CD4-positive, alpha-beta memory T cell (primary cell): ENCODE measurements at regions of chr16 and their contacts with region 1.

Region 1: DNA sequence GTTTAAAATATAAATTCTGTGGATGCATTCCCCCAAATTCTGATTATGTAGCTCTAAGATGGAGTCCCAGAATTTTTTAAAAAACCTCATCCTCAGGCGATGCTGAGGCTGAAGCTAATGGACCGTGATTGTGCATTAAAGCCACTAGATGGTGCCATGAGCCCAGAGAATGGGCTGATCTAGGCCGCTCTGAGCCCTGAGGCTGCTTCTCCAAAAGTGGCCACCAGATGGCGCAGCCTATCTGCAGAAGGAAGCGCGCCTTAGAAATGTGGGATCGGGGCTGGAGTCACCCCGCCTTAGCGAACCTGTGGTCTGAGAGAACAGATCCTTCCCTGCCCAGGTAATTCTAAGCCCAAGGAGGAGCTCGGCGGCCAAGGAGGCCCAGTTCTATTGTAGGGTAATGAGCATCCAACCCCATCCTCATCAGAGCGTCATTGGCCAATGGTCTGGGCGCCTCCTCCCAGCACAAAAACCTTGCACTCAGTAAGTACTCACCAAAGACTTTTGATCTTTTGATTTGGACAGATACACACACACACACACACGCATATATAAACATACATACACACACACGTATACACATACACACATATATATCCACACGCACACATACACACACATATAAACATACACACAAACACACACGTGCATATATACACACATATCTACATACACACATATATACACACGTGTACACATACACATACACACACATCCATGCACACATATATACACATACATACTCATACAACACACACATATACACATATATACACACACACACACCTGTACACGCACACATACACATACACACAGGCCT is 13.7 kb upstream of the MMP2 start:
- DNase-seq: peak; percentile 70 to 79 (median 74)
- H3K4me3 ChIP-seq: no peak overlapping the region
- H3K4me3 Mint-ChIP-seq: peak overlapping the region in 1 of 8 donors; percentile 22
- H3K27ac ChIP-seq: no peak overlapping the region
- H3K27ac Mint-ChIP-seq: no peak overlapping the region
- H3K4me1 ChIP-seq: no peaks in the 10 kb centered on the region
- H3K4me1 Mint-ChIP-seq: peaks cover 0 to 5% (median 1%) of the 10 kb centered on the region in 4 donors
- H3K27me3 ChIP-seq: no peaks in the 10 kb centered on the region
- H3K27me3 Mint-ChIP-seq: peaks cover 0 to 3% of the 10 kb centered on the region in 2 donors

Region 2: GRCh38 chr16:55189682-55190636 is 275.3 kb before region 1 on chr16:
- CTCF ChIA-PET with region 1: no interaction called
- POLR2A ChIA-PET with region 1: no interaction called
- intact Hi-C with region 1: no loop called
- DNase-seq: no peak
- H3K4me3 ChIP-seq: no peak overlapping the region
- H3K4me3 Mint-ChIP-seq: no peak overlapping the region
- H3K27ac ChIP-seq: no peak overlapping the region
- H3K27ac Mint-ChIP-seq: no peak overlapping the region
- H3K4me1 ChIP-seq: no peaks in the 10 kb centered on the region
- H3K4me1 Mint-ChIP-seq: no peaks in the 10 kb centered on the region
- H3K27me3 ChIP-seq: no peaks in the 10 kb centered on the region
- H3K27me3 Mint-ChIP-seq: peaks cover 2 to 4% of the 10 kb centered on the region in 2 donors

Region 3: GRCh38 chr16:55323637-55324490 is 141.4 kb before region 1 on chr16 and contains the start of gene IRX6:
- CTCF ChIA-PET with region 1: no interaction called
- POLR2A ChIA-PET with region 1: no interaction called
- intact Hi-C with region 1: no loop called
- DNase-seq: no peak
- H3K4me3 ChIP-seq: no peak within 1 kb of the TSS
- H3K4me3 Mint-ChIP-seq: no peak within 1 kb of the TSS
- H3K27ac ChIP-seq: no peak within 1 kb of the TSS
- H3K27ac Mint-ChIP-seq: no peak within 1 kb of the TSS
- H3K4me1 ChIP-seq: no peaks in the 10 kb centered on the region
- H3K4me1 Mint-ChIP-seq: no peaks in the 10 kb centered on the region
- H3K27me3 ChIP-seq: peaks cover 8% of the 10 kb centered on the region
- H3K27me3 Mint-ChIP-seq: peaks cover 28 to 29% of the 10 kb centered on the region in 2 donors
- total RNA-seq, gene IRX6: not detected

Region 4: DNA sequence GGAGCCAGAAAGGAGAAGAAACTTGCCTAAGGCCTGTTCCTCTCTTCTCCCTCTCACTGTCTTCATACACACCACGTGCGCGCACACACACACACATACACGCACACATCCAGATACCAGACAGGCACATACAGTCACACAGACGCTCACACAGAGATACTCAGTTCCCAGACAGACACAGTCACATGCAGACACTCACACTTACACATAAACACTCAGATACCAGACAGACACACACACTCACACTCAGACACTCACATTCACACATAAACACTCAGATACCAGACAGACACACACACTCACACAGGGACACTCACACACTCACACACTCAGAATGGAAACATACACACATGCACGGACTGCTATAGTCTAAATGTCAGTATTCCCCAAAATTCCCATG is 10.4 kb before region 1 on chr16:
- CTCF ChIA-PET with region 1: interaction called, 15 read pairs
- POLR2A ChIA-PET with region 1: interaction called, 3 read pairs
- intact Hi-C with region 1: no loop called
- DNase-seq: no peak
- H3K4me3 ChIP-seq: no peak overlapping the region
- H3K4me3 Mint-ChIP-seq: no peak overlapping the region
- H3K27ac ChIP-seq: no peak overlapping the region
- H3K27ac Mint-ChIP-seq: no peak overlapping the region
- H3K4me1 ChIP-seq: no peaks in the 10 kb centered on the region
- H3K4me1 Mint-ChIP-seq: no peaks in the 10 kb centered on the region
- H3K27me3 ChIP-seq: no peaks in the 10 kb centered on the region
- H3K27me3 Mint-ChIP-seq: peaks cover 4 to 8% of the 10 kb centered on the region in 2 donors

Region 5: GRCh38 chr16:55480228-55480661 is 15.0 kb after region 1 on chr16:
- CTCF ChIA-PET with region 1: interaction called, 30 read pairs
- POLR2A ChIA-PET with region 1: no interaction called
- intact Hi-C with region 1: no loop called
- DNase-seq: no peak
- H3K4me3 ChIP-seq: no peak overlapping the region
- H3K4me3 Mint-ChIP-seq: no peak overlapping the region
- H3K27ac ChIP-seq: no peak overlapping the region
- H3K27ac Mint-ChIP-seq: no peak overlapping the region
- H3K4me1 ChIP-seq: no peaks in the 10 kb centered on the region
- H3K4me1 Mint-ChIP-seq: peaks cover 0 to 5% (median 0%) of the 10 kb centered on the region in 4 donors
- H3K27me3 ChIP-seq: peaks cover 3% of the 10 kb centered on the region
- H3K27me3 Mint-ChIP-seq: peaks cover 25 to 34% of the 10 kb centered on the region in 2 donors

Region 6: DNA sequence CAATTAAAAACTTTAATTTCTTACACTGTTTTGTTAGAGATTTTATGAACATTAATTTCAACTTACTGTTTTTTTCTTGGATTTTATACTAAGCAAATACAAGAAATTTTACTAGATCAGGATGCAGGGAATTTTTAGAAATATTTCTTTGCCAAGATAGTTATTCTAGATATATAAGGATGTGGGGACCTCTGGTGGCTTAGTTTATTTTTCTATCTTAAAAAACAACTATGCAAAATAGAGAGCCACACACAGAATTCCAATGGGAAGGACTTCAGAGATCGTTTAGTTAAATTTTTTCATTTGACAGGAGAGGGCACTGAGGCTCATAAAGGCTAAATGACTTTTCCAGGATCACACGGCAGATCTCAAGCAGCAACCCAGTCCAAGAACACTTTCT is 78.2 kb after region 1 on chr16:
- CTCF ChIA-PET with region 1: interaction called, 11 read pairs
- POLR2A ChIA-PET with region 1: no interaction called
- intact Hi-C with region 1: no loop called
- DNase-seq: no peak
- H3K4me3 ChIP-seq: no peak overlapping the region
- H3K4me3 Mint-ChIP-seq: no peak overlapping the region
- H3K27ac ChIP-seq: no peak overlapping the region
- H3K27ac Mint-ChIP-seq: no peak overlapping the region
- H3K4me1 ChIP-seq: no peaks in the 10 kb centered on the region
- H3K4me1 Mint-ChIP-seq: no peaks in the 10 kb centered on the region
- H3K27me3 ChIP-seq: no peaks in the 10 kb centered on the region
- H3K27me3 Mint-ChIP-seq: peaks cover 2% of the 10 kb centered on the region in 2 donors

Region 7: DNA sequence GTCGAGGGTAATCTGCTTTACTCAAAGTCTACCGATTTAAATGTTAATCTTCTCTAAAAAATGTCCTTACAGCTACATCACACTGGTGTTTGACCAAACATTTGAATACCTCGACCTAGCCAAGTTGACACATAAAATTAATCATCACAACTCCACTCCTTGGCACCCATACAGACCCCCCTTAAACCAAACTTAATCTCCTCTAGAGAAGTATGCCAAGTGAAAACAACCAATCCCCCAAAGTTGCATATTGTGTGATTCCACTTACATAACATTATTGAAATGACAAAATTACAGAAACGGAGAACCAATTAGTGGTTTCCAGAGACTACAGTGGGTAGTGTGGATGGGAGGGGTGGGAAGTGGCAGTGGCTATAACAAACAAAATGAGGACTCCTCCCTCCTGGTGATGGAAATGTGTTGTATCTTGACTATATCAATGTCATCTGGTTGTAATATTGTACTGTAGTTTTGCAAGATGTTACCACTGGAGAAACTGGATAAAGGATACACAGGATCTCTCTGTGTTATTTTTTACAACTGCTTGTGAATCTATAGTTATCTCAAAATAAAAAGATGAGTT is 140.6 kb after region 1 on chr16:
- CTCF ChIA-PET with region 1: no interaction called
- POLR2A ChIA-PET with region 1: no interaction called
- intact Hi-C with region 1: no loop called
- DNase-seq: no peak
- H3K4me3 ChIP-seq: no peak overlapping the region
- H3K4me3 Mint-ChIP-seq: no peak overlapping the region
- H3K27ac ChIP-seq: no peak overlapping the region
- H3K27ac Mint-ChIP-seq: no peak overlapping the region
- H3K4me1 ChIP-seq: no peaks in the 10 kb centered on the region
- H3K4me1 Mint-ChIP-seq: no peaks in the 10 kb centered on the region
- H3K27me3 ChIP-seq: no peaks in the 10 kb centered on the region
- H3K27me3 Mint-ChIP-seq: peaks cover 2 to 3% of the 10 kb centered on the region in 2 donors

Region 8: GRCh38 chr16:55701442-55702319 is 236.4 kb after region 1 on chr16:
- CTCF ChIA-PET with region 1: interaction called, 43 read pairs
- POLR2A ChIA-PET with region 1: no interaction called
- intact Hi-C with region 1: no loop called
- DNase-seq: peak in 3 of 5 donors; percentile 12 to 16 (median 13)
- H3K4me3 ChIP-seq: no peak overlapping the region
- H3K4me3 Mint-ChIP-seq: no peak overlapping the region
- H3K27ac ChIP-seq: no peak overlapping the region
- H3K27ac Mint-ChIP-seq: peak overlapping the region in 1 of 7 donors; percentile 14
- H3K4me1 ChIP-seq: no peaks in the 10 kb centered on the region
- H3K4me1 Mint-ChIP-seq: peaks cover 0 to 10% (median 2%) of the 10 kb centered on the region in 4 donors
- H3K27me3 ChIP-seq: no peaks in the 10 kb centered on the region
- H3K27me3 Mint-ChIP-seq: peaks cover 4 to 11% of the 10 kb centered on the region in 2 donors

Region 9: GRCh38 chr16:55842369-55843104 is 377.2 kb after region 1 on chr16:
- CTCF ChIA-PET with region 1: interaction called, 36 read pairs
- POLR2A ChIA-PET with region 1: no interaction called
- intact Hi-C with region 1: no loop called
- DNase-seq: peak in 4 of 5 donors; percentile 24 to 41 (median 34)
- H3K4me3 ChIP-seq: no peak overlapping the region
- H3K4me3 Mint-ChIP-seq: no peak overlapping the region
- H3K27ac ChIP-seq: no peak overlapping the region
- H3K27ac Mint-ChIP-seq: no peak overlapping the region
- H3K4me1 ChIP-seq: no peaks in the 10 kb centered on the region
- H3K4me1 Mint-ChIP-seq: peaks cover 0 to 4% (median 3%) of the 10 kb centered on the region in 4 donors
- H3K27me3 ChIP-seq: peaks cover 3% of the 10 kb centered on the region
- H3K27me3 Mint-ChIP-seq: peaks cover 11 to 13% of the 10 kb centered on the region in 2 donors